PC-9 (cell line): ENCODE measurements at regions of chrX and their contacts with region 1.

Region 1: GRCh38 chrX:132837126-132837525 is 121.3 kb downstream of the HS6ST2 start:
- DNase-seq: peak; percentile 6 to 74
- H3K4me3 ChIP-seq: no peak overlapping the region
- H3K27ac ChIP-seq: peak overlapping the region; percentile 28
- H3K4me1 ChIP-seq: peaks cover 30% of the 10 kb centered on the region
- H3K27me3 ChIP-seq: no peaks in the 10 kb centered on the region
- CTCF ChIP-seq: no peak

Region 2: DNA sequence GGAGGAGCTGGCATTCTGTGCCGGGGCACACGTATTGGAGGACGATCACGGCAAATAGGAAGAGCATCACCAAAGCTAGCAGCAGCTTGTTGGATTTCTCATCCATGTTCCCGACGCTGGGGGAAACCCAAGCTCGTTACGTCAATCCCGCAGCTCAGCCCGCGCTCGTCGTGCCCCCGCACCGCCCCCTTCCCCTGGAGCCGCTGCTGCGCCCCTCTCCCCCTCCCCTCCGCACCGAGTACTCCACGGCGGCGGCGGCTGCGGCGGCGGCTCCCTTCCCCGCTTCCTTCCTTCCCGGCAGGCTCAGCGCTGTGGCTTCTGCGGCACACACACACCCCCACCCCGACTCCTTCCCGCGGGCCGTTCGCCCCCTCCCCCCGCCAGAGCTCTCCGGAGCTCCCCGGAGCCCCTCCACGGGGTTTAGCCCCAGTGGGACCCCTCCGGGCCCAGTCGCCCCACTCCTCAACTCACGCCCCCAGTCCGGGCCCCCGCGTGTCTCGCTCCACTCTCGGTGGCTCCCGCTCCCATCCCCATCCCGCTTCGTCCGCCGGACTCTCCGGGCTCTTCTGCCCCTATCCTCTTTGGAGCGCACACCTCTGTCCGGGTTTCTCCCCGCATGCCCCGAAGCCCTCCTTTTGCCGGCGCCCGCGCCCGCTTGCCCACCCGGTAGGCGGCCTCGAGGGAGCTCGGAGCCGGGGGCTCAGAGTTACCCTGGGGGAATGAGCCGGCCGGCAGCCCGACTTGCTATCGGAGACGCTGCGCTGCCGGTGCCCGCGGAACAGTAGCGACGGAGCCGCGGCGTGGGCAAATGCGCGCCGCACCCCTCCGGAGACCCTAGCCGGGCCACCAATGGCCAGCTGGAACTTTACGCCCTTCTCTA is 120.3 kb after region 1 on chrX:
- CTCF ChIA-PET with region 1: no interaction called
- POLR2A ChIA-PET with region 1: no interaction called
- intact Hi-C with region 1: loop called (anchors 10 kb)
- DNase-seq: peak in 1 of 2 experiments; percentile 28
- H3K4me3 ChIP-seq: peak overlapping the region; percentile 97
- H3K27ac ChIP-seq: peak overlapping the region; percentile 70
- H3K4me1 ChIP-seq: peaks cover 58% of the 10 kb centered on the region
- H3K27me3 ChIP-seq: no peaks in the 10 kb centered on the region
- CTCF ChIP-seq: no peak